HCT116 (cell line): ENCODE measurements at regions of chr2 and their contacts with region 1.

Region 1: GRCh38 chr2:43131024-43131889 is 95.1 kb downstream of the ZFP36L2 start:
- DNase-seq: peak; percentile 89
- ATAC-seq: peak; percentile 80
- H3K4me3 ChIP-seq: peak overlapping the region; percentile 25 to 41
- H3K27ac ChIP-seq: peak overlapping the region; percentile 65
- H3K4me1 ChIP-seq: peaks cover 20 to 23% of the 10 kb centered on the region in 2 experiments
- H3K27me3 ChIP-seq: no peaks in the 10 kb centered on the region
- CTCF ChIP-seq: peak in 2 of 3 experiments; percentile 62 to 71; a peak in 4 of 6 replicates
- POLR2A ChIP-seq: no peak
- RAD21 ChIP-seq: no peak

Region 2: GRCh38 chr2:42974721-42975717 is 156.2 kb before region 1 on chr2:
- CTCF ChIA-PET with region 1: interaction called, 3 read pairs
- POLR2A ChIA-PET with region 1: no interaction called
- RAD21 ChIA-PET with region 1: interaction called in 1 of 2 experiments, 3 read pairs
- intact Hi-C with region 1: loop called (anchors 5 kb)
- DNase-seq: peak; percentile 6
- ATAC-seq: peak; percentile 92
- H3K4me3 ChIP-seq: peak overlapping the region in 1 of 2 experiments; percentile 11; a peak in 1 of 4 replicates
- H3K27ac ChIP-seq: no peak overlapping the region
- H3K4me1 ChIP-seq: peaks cover 0 to 4% of the 10 kb centered on the region in 2 experiments; a peak in 1 of 4 replicates
- H3K27me3 ChIP-seq: no peaks in the 10 kb centered on the region
- CTCF ChIP-seq: peak; percentile 83 to 86 (median 84)
- POLR2A ChIP-seq: no peak
- RAD21 ChIP-seq: peak; percentile 97

Region 3: GRCh38 chr2:43343573-43344304 is 212.5 kb after region 1 on chr2:
- CTCF ChIA-PET with region 1: no interaction called
- POLR2A ChIA-PET with region 1: no interaction called
- RAD21 ChIA-PET with region 1: no interaction called
- intact Hi-C with region 1: no loop called
- DNase-seq: no peak
- ATAC-seq: no peak
- H3K4me3 ChIP-seq: no peak overlapping the region
- H3K27ac ChIP-seq: no peak overlapping the region
- H3K4me1 ChIP-seq: peaks cover 13 to 18% of the 10 kb centered on the region in 2 experiments
- H3K27me3 ChIP-seq: no peaks in the 10 kb centered on the region
- CTCF ChIP-seq: no peak
- POLR2A ChIP-seq: no peak
- RAD21 ChIP-seq: no peak

Region 4: DNA sequence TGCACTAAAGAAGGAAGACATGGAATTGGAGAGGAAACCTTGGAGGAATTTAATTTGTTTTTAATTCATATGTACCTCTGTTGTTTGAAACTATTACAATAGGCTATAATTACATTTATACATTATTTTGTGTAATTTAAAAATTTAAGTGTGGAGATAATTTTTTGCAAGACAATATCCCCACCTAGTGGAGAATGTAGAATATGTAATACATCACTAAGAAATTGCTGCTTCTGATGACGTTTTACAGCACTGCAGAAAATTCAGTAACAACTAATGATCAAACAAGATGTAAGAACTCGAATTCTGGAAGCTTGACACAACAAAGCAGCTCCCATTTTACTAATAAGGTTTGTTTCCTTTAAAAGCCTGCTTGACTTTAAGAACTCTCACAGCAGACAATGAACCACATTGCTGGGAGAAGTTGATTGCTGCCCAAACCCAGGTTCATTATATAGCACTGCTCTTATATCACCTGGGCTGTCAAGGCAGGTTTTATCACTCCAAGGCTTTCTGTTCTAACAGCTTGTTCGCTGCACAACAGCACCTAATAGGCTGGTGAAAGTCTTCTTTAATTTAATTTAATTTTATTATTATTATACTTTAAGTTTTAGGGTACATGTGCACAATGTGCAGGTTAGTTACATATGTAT is 411.2 kb after region 1 on chr2:
- CTCF ChIA-PET with region 1: no interaction called
- POLR2A ChIA-PET with region 1: no interaction called
- RAD21 ChIA-PET with region 1: no interaction called
- intact Hi-C with region 1: loop called (anchors 5 kb)
- DNase-seq: peak; percentile 18
- ATAC-seq: peak; percentile 59
- H3K4me3 ChIP-seq: no peak overlapping the region
- H3K27ac ChIP-seq: no peak overlapping the region
- H3K4me1 ChIP-seq: no peaks in the 10 kb centered on the region
- H3K27me3 ChIP-seq: no peaks in the 10 kb centered on the region
- CTCF ChIP-seq: peak; percentile 24 to 60 (median 54); a peak in 3 of 6 replicates
- POLR2A ChIP-seq: no peak
- RAD21 ChIP-seq: peak; percentile 73